ENCODE measurements at regions of chr20 and their contacts with region 1.

Region 1: DNA sequence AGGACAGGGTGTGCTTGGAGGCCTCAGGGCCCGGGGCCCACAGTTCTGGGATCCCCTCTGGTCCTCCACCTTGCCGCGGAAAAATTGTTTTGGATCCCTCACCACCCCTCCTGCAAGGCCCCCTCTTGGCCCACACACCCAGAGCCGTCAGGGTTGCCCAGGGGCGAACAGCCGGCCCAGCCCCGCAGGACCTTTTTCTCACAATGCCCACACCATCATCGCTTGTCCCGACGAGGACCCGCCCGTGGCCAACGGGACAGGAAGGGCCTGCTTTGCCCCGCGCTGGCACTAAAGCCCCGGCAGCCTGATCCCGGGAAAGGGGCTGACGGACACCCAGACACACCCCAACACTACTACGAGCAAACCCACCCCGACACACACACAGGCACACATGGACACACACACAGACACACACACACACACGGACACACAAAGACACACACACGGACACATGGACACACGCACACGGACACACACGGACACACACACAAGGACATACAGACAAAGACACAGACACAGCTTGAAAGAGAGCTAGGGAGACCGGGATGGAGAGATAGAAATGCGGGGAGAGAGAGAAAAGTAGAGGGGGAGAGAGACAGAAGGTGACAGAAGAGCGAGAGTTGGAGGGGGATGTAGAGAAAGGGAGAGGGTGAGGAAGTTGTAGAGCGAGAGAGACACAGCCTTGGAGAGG is 1493.5 kb upstream of the DEFB115 start:
- DNase-seq: no peak
- ATAC-seq: no peak
- H3K4me3 ChIP-seq: no peak overlapping the region
- H3K27ac ChIP-seq: no peak overlapping the region
- H3K4me1 ChIP-seq: peaks cover 4% of the 10 kb centered on the region
- H3K27me3 ChIP-seq: no peaks in the 10 kb centered on the region
- CTCF ChIP-seq: no peak

Region 2: DNA sequence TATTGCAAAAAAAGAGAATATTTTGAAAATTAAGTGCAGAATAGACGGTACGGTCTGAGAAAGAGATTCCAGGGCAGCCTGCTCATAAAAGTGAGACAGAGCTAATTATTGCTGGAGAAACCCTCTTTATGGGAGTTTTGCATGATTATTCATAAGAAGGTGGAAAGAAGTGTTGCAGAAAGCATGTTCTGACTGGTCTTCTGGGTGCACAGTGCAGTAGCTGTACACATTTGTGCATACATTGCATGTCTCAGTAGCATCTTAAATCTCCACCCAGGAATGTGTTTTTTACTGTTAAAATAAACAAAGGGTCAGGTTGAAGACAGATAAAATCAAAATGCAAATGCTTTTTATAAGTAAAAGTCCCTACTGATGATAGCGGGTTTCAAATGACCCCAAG is 320.1 kb before region 1 on chr20:
- CTCF ChIA-PET with region 1: no interaction called
- POLR2A ChIA-PET with region 1: no interaction called
- in situ Hi-C with region 1: no loop called
- intact Hi-C with region 1: loop called (anchors 10 kb)
- DNase-seq: no peak
- ATAC-seq: no peak
- H3K4me3 ChIP-seq: no peak overlapping the region; a peak in 1 of 4 replicates
- H3K27ac ChIP-seq: no peak overlapping the region
- H3K4me1 ChIP-seq: peaks cover 6% of the 10 kb centered on the region; the same call in 1 of the 2 replicates
- H3K27me3 ChIP-seq: 0 out of 2 replicates have a peak, but pooled peaks cover 2% of the 10 kb centered on the region
- CTCF ChIP-seq: no peak

Region 3: DNA sequence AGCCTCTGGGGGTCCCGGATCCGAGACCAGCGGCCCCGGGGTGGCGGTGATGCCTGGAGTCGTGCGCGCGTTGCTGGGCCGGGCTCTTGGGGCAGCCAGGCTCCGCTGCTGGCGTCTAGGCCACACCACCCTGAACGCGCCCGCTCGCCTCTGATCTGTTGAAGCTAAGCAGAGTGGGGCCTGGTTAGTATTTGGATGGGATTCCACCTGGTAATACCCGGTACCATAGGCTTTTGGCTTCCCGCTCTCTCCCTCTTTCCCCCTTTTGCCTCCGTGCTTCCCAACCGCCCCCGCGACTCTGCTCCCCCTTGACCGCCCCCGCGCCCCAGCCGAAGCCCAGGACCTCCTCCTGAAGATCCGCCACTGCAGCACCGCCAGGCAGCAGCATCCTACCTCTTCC is 110.0 kb after region 1 on chr20:
- CTCF ChIA-PET with region 1: interaction called, 13 read pairs
- POLR2A ChIA-PET with region 1: no interaction called
- in situ Hi-C with region 1: no loop called
- intact Hi-C with region 1: no loop called
- DNase-seq: no peak
- ATAC-seq: no peak
- H3K4me3 ChIP-seq: peak overlapping the region in 1 of 2 experiments; percentile 18; a peak in 1 of 4 replicates
- H3K27ac ChIP-seq: no peak overlapping the region
- H3K4me1 ChIP-seq: no peaks in the 10 kb centered on the region
- H3K27me3 ChIP-seq: no peaks in the 10 kb centered on the region
- CTCF ChIP-seq: no peak